BJ (cell line): ENCODE measurements at regions of chr15 and their contacts with region 1.

Region 1: GRCh38 chr15:45205192-45205591 is 17.4 kb upstream of the SHF start:
- DNase-seq: no peak
- H3K4me3 ChIP-seq: no peak overlapping the region
- H3K27me3 ChIP-seq: peaks cover 3% of the 10 kb centered on the region
- CTCF ChIP-seq: peak; percentile 84

Region 2: GRCh38 chr15:45225506-45226273 is 20.5 kb after region 1 on chr15:
- CTCF ChIA-PET with region 1: interaction called, 21 read pairs
- POLR2A ChIA-PET with region 1: no interaction called
- DNase-seq: no peak
- H3K4me3 ChIP-seq: no peak overlapping the region
- H3K27me3 ChIP-seq: peaks cover 1% of the 10 kb centered on the region; the same call in 1 of the 2 replicates
- CTCF ChIP-seq: no peak

Region 3: GRCh38 chr15:45402162-45402954 is 197.2 kb after region 1 on chr15:
- CTCF ChIA-PET with region 1: interaction called, 21 read pairs
- POLR2A ChIA-PET with region 1: no interaction called
- DNase-seq: peak; percentile 91
- H3K4me3 ChIP-seq: peak overlapping the region; percentile 98
- H3K27me3 ChIP-seq: peaks cover 4% of the 10 kb centered on the region
- CTCF ChIP-seq: no peak